GM12878 (cell line): ENCODE measurements at regions of chr5 and their contacts with region 1.

Region 1: DNA sequence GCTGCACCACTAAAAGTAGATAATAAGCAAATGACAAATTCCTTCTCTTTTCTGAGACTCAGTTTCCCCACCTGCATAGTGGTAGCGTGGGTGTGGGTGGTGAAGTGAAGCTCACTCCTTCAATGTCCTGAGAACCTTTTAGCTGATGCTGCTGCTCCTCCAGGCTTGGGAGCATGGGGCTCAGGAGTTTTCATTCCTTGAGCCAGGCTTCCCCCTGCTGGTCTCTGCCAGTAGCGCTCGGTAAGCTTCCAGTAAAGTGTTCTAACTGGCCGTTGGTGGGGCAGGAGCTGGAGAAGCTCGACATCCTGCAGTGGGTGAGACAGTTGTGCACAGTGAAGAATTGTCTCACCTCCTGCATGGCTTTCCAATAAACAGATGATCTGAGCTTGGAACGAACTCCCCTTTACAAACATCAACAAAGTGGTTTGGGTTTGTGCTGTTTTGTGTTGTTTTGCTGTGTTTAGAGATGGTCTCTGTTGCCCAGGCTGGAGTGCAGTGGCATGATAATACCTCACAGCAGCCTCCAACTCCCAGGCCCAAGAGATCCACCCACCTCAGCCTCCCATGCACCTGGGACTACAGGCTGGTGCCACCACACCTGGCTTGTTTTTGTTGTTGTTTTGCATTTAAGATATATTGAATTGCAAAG is 34.6 kb downstream of the SPARC start:
- DNase-seq: no peak
- ATAC-seq: peak; percentile 100
- H3K4me3 ChIP-seq: no peak overlapping the region
- H3K27ac ChIP-seq: no peak overlapping the region
- H3K4me1 ChIP-seq: no peaks in the 10 kb centered on the region
- H3K27me3 ChIP-seq: no peaks in the 10 kb centered on the region; a peak in 1 of 4 replicates
- CTCF ChIP-seq: peak; percentile 96 to 99 (median 97); a peak in 5 of 6 replicates
- EP300 ChIP-seq: no peak
- POLR2A ChIP-seq: no peak
- RAD21 ChIP-seq: peak; percentile 95

Region 2: GRCh38 chr5:151058891-151059489 is 593.1 kb before region 1 on chr5:
- CTCF ChIA-PET with region 1: no interaction called
- POLR2A ChIA-PET with region 1: no interaction called
- RAD21 ChIA-PET with region 1: no interaction called
- SMC1A ChIA-PET with region 1: no interaction called
- in situ Hi-C with region 1: no loop called
- intact Hi-C with region 1: no loop called
- DNase-seq: no peak
- ATAC-seq: peak; percentile 18
- H3K4me3 ChIP-seq: no peak overlapping the region
- H3K27ac ChIP-seq: peak overlapping the region; percentile 86
- H3K4me1 ChIP-seq: peaks cover 43% of the 10 kb centered on the region
- H3K27me3 ChIP-seq: no peaks in the 10 kb centered on the region
- CTCF ChIP-seq: peak in 2 of 3 experiments; percentile 11 to 23; a peak in 2 of 6 replicates
- EP300 ChIP-seq: no peak
- POLR2A ChIP-seq: no peak
- RAD21 ChIP-seq: peak; percentile 27; the same call in 1 of the 2 replicates

Region 3: DNA sequence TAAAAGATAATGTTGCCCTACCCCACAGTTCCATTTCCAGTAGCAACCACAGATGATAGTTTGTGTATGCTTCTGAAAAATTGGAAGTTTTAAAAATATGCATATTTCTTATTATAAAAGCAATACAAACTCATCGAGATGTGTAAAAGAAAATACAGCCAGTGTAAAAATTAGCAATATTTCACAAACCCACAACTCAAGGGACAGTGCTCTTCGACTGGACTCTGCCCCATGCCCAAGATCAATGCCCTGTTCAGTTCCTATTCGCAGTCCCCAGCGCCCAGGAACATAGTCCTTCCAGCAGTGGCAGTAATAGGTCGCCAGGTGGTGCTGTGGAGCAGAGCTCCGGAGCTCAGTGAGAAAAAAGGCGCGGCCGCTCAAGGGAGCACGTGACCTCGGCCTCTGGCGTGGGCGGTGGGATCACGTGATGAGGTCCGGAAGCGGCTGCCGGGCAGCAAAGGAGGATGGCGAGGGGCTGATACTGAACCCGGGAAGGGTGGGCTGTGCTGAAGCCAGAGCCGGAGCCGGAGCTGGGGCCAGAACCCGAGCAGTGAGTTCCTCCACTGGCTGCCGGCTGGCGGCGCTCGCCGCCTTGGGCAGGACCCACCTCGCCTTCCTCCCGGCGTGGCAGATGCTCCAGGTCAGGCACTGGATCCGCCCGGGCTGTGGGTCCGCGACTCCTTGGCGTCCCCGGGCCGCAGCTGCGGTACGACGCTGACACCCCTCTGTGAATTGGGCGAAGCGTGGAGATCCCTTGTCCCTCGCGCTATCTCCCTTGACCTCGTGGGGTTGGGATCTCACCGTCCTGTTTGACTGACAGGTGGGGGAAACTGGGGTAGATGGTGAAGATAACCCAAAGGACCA is 204.7 kb before region 1 on chr5 and contains the start of gene SLC36A1:
- CTCF ChIA-PET with region 1: interaction called, 137 read pairs
- POLR2A ChIA-PET with region 1: no interaction called
- RAD21 ChIA-PET with region 1: interaction called, 52 read pairs
- SMC1A ChIA-PET with region 1: interaction called, 27 read pairs
- in situ Hi-C with region 1: loop called (anchors 5 kb)
- intact Hi-C with region 1: loop called (anchors 1 kb)
- DNase-seq: peak; percentile 68
- ATAC-seq: peak; percentile 89
- H3K4me3 ChIP-seq: peak within 1 kb of the TSS; percentile 87
- H3K27ac ChIP-seq: no peak within 1 kb of the TSS
- H3K4me1 ChIP-seq: peaks cover 12% of the 10 kb centered on the region
- H3K27me3 ChIP-seq: no peaks in the 10 kb centered on the region
- CTCF ChIP-seq: peak; percentile 84 to 97 (median 93); a peak in 4 of 6 replicates
- EP300 ChIP-seq: peak in 1 of 2 experiments; percentile 22; a peak in 1 of 4 replicates
- POLR2A ChIP-seq: peak; percentile 86
- RAD21 ChIP-seq: peak; percentile 94
- polyA plus RNA-seq, gene SLC36A1: 0.50 to 0.66 TPM

Region 4: DNA sequence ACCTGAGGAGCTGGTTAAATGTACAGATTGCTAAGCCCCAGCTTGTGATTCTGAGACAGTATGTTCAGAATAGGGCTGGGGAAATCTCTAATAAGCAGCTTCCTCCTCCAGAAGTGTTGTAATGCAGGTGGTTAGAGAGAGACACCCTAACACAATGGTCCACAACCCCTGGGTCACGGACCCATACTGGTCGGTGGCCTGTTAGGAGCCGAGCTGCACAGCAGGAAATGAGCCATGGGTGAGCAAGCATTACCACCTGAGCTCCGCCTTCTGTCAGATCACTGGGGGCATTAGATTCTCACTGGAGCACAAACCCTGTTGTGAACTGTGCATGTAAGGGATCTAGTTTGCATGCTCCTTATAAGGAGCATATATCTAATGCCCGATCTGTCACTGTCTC is 142.9 kb before region 1 on chr5:
- CTCF ChIA-PET with region 1: interaction called, 26 read pairs
- POLR2A ChIA-PET with region 1: no interaction called
- RAD21 ChIA-PET with region 1: interaction called, 6 read pairs
- SMC1A ChIA-PET with region 1: interaction called, 14 read pairs
- in situ Hi-C with region 1: no loop called
- intact Hi-C with region 1: no loop called
- DNase-seq: no peak
- ATAC-seq: peak; percentile 32; the same call in 1 of the 3 replicates
- H3K4me3 ChIP-seq: no peak overlapping the region
- H3K27ac ChIP-seq: no peak overlapping the region
- H3K4me1 ChIP-seq: no peaks in the 10 kb centered on the region
- H3K27me3 ChIP-seq: no peaks in the 10 kb centered on the region
- CTCF ChIP-seq: no peak
- EP300 ChIP-seq: no peak
- POLR2A ChIP-seq: no peak
- RAD21 ChIP-seq: no peak

Region 5: GRCh38 chr5:151619796-151620460 is 32.2 kb before region 1 on chr5:
- CTCF ChIA-PET with region 1: interaction called, 14 read pairs
- POLR2A ChIA-PET with region 1: no interaction called
- RAD21 ChIA-PET with region 1: interaction called, 24 read pairs
- SMC1A ChIA-PET with region 1: interaction called, 18 read pairs
- in situ Hi-C with region 1: no loop called
- intact Hi-C with region 1: no loop called
- DNase-seq: no peak
- ATAC-seq: no peak
- H3K4me3 ChIP-seq: no peak overlapping the region
- H3K27ac ChIP-seq: no peak overlapping the region
- H3K4me1 ChIP-seq: peaks cover 5% of the 10 kb centered on the region
- H3K27me3 ChIP-seq: no peaks in the 10 kb centered on the region; a peak in 1 of 4 replicates
- CTCF ChIP-seq: no peak
- EP300 ChIP-seq: no peak
- POLR2A ChIP-seq: no peak
- RAD21 ChIP-seq: no peak

Region 6: DNA sequence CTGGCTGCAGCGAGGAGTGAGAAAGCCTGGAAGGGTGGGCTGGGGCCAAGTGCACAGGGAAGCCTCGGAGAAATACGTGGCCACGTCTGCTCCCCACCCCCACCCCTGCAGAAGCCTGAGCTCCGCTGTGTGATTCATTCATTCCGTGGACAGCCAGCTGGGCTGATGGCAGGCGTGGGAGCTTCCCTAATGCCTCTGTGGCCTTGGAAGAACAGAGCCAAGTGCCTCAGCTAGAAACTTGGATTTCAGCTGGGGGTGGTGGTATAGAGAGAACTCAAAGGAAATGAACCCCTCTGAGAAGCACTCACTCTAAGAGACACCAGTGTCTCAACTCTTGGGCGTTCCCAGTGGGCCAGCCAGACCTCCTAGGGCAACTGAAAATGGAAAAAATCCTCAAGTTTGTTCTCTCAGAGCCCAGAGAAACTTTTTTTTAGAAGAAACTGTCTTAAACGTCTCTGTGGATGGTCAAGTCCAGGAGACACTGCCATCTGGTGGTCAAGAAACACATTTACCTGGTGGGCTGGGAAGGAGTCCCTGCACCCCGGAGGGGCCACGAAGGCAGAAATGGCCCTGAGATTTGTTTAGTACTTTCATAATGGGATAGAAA is 88.3 kb after region 1 on chr5:
- CTCF ChIA-PET with region 1: interaction called, 381 read pairs
- POLR2A ChIA-PET with region 1: no interaction called
- RAD21 ChIA-PET with region 1: interaction called, 207 read pairs
- SMC1A ChIA-PET with region 1: interaction called, 154 read pairs
- in situ Hi-C with region 1: no loop called
- intact Hi-C with region 1: no loop called
- DNase-seq: no peak
- ATAC-seq: peak; percentile 70
- H3K4me3 ChIP-seq: no peak overlapping the region
- H3K27ac ChIP-seq: peak overlapping the region; percentile 54
- H3K4me1 ChIP-seq: peaks cover 39% of the 10 kb centered on the region
- H3K27me3 ChIP-seq: no peaks in the 10 kb centered on the region
- CTCF ChIP-seq: peak; percentile 76 to 88 (median 81)
- EP300 ChIP-seq: no peak
- POLR2A ChIP-seq: no peak
- RAD21 ChIP-seq: peak; percentile 90